Naive thymus-derived CD8-positive, alpha-beta T cell (primary cell): ENCODE measurements at regions of chr9 and their contacts with region 1.

Region 1: DNA sequence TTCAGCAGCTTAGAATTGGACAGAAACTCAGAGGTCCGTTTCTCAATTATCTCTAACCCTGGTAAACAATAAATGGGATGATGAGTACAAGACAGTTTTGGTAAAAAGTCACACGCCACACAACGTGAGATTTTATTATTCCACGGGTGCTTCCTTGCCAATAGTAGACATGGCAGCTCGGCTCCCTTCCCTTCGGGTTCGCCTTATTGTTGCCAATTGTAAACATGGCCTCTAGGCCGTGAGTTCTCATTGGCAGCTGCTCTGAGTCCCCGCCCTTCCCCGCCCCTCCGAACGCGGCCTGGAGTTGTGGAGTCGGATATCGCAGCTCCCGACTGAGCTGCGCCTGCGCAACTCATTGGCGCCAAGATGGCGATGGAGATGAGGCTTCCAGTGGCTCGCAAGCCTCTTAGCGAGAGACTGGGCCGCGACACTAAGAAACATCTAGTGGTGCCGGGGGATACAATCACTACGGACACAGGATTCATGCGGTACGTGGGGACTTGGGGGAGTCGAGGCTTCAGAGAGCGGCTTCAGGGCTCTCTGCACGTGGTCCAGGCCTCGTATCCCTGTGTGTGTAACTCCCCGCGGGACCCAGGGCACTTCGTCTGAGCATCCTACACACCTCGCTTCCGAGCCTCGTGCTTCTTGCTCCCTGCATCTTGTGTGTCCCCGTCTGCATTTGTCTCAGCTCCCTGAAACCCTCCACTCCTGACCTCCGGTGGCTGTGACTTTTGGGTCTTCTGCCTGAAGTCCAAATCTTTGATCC is at the start of gene EXOSC2:
- DNase-seq: peak; percentile 80 to 99 (median 94)
- ATAC-seq: peak; percentile 99
- H3K4me3 Mint-ChIP-seq: peak within 1 kb of the TSS; percentile 95 to 98 (median 97)
- H3K27ac Mint-ChIP-seq: peak within 1 kb of the TSS; percentile 89 to 99 (median 96)
- H3K4me1 Mint-ChIP-seq: peaks cover 33 to 50% (median 44%) of the 10 kb centered on the region in 4 donors
- H3K27me3 Mint-ChIP-seq: no peaks in the 10 kb centered on the region
- polyA plus RNA-seq, gene EXOSC2: 18.7 to 31.1 (median 25.0) TPM

Region 2: DNA sequence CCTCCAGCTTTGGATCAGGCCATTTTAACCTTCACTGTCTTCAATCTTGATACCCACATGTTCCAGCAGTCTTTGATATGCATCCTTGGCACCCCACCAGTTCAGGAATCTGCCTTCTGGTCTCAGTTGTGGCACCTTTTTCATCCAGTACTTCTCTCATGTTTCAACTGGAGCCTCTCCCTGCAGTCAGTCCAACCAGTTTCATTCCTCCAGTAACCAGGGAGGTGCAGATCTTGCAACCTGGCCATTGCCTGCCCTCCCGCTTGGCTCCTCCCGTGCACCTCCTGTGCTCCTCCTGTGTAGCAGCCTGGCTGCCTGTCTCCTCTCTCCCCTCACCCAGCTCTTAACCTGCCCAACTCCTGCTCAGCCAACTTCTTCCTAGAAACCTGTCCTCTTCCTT is 94.0 kb before region 1 on chr9:
- POLR2A ChIA-PET with region 1: no interaction called
- DNase-seq: no peak
- ATAC-seq: no peak
- H3K4me3 Mint-ChIP-seq: no peak overlapping the region
- H3K27ac Mint-ChIP-seq: peak overlapping the region in 1 of 10 donors; percentile 79
- H3K4me1 Mint-ChIP-seq: peaks cover 0 to 16% (median 9%) of the 10 kb centered on the region in 4 donors
- H3K27me3 Mint-ChIP-seq: no peaks in the 10 kb centered on the region

Region 3: GRCh38 chr9:130682490-130683121 is 11.0 kb before region 1 on chr9:
- POLR2A ChIA-PET with region 1: interaction called, 15 read pairs
- DNase-seq: peak in 8 of 10 donors; percentile 17 to 65 (median 48)
- ATAC-seq: peak; percentile 40 to 42
- H3K4me3 Mint-ChIP-seq: peak overlapping the region; percentile 83 to 99 (median 96)
- H3K27ac Mint-ChIP-seq: peak overlapping the region in 6 of 10 donors; percentile 3 to 90 (median 64)
- H3K4me1 Mint-ChIP-seq: peaks cover 3 to 7% (median 6%) of the 10 kb centered on the region in 4 donors
- H3K27me3 Mint-ChIP-seq: peaks cover 3 to 26% (median 9%) of the 10 kb centered on the region in 5 donors